ENCODE measurements at regions of chr10 and their contacts with region 1.

Region 1: DNA sequence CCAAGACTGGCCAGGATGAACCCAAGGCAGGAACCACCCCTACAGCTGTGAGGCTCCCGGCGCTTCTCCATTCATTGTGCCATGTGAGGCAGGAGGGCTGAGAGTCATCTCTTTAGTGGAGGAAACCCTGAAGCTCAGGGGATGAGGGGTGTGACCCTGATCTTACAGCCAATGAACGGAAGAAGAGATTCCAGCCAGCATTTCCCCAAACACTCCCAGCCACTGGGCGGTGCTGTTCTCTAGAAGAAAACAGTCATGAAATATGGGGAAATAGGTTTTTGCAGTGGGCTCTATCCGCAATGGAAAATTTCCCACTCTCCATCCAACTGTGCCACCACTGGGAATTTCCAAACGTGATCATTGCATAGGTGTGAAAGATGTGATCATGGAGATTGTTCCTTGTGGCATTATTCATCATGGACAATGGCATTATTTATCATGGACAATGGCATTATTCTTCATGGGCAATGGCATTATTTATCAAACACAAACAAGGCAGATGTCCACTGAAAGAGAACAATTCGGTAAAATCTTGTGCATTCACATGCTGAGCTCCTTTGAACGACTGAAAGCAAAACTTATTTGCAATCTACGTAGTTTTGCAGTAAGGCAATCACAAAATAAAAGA is 14.0 kb upstream of the SLC18A2 start:
- DNase-seq: peak in 1 of 2 experiments; percentile 65
- H3K4me3 ChIP-seq: no peak overlapping the region
- H3K27ac ChIP-seq: no peak overlapping the region
- H3K4me1 ChIP-seq: no peaks in the 10 kb centered on the region
- H3K27me3 ChIP-seq: no peaks in the 10 kb centered on the region
- CTCF ChIP-seq: peak; percentile 69 to 90 (median 80)
- EP300 ChIP-seq: no peak
- POLR2A ChIP-seq: no peak
- RAD21 ChIP-seq: peak; percentile 85 to 87

Region 2: DNA sequence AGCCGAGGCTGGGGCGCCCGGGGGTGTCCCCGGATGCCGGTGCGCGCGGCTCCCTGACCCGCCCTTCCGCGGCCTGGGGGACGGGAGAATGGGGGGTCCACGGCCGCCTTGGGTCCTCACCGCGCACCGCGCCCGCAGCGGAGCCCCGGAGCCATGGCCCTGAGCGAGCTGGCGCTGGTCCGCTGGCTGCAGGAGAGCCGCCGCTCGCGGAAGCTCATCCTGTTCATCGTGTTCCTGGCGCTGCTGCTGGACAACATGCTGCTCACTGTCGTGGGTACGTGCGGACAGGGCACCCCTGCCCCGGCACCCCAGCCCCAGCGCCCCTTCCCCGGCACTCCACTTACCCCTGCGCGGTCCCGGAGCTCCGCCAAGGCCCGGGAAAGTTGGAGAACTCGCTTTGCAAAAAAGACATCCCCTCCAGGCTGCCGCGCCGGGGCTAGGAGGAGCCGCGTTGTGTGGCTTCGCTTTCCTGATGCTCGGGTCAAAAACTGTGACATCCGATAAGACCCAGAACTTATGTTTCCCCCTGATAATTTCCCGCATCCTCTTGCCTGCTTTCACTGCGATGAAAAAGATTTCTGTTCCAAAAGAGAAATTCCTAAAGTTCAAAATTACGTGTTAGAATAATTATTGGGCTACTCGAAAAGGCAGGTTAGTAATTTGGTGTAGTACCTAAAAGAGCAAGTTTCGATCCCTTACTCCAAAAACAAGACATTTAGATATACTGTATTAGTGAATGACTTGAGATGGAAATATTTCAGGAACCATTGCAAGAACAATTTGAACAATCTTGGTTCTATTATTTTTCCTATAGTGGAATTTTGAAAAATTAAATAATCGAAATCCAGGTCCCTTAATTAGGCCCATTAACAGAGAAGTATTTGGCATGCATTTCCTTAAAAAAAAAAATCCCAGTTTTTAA is 14.9 kb after region 1 on chr10:
- CTCF ChIA-PET with region 1: interaction called, 14 read pairs
- POLR2A ChIA-PET with region 1: interaction called, 5 read pairs
- DNase-seq: peak in 1 of 2 experiments; percentile 72
- H3K4me3 ChIP-seq: peak overlapping the region; percentile 55 to 87 (median 65)
- H3K27ac ChIP-seq: no peak overlapping the region
- H3K4me1 ChIP-seq: peaks cover 0 to 6% (median 3%) of the 10 kb centered on the region in 4 experiments; a peak in 5 of 7 replicates
- H3K27me3 ChIP-seq: peaks cover 2 to 24% (median 13%) of the 10 kb centered on the region in 4 experiments
- CTCF ChIP-seq: no peak
- EP300 ChIP-seq: no peak
- POLR2A ChIP-seq: no peak
- RAD21 ChIP-seq: no peak

Region 3: DNA sequence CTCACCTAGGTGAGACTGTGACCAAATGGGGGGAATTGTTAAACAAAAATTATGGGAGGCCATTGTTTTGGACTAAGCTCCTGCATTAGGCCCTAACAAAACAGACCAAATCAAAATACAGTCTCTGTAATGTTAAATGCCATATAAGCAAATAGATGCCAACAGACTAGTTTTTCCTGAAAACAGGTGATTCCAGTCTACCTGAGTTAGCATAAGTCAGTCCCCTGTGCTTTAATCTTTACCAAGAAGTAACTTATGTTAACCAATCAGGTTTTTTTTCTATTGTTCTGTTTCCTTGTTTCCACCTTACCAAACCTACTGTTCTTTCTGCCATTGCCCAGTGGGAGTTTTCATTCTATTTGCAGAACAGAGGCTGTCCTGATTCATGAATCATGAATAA is 100.3 kb after region 1 on chr10:
- CTCF ChIA-PET with region 1: interaction called, 12 read pairs
- POLR2A ChIA-PET with region 1: no interaction called
- DNase-seq: no peak
- H3K4me3 ChIP-seq: peak overlapping the region in 1 of 4 experiments; percentile 12; a peak in 1 of 8 replicates
- H3K27ac ChIP-seq: no peak overlapping the region
- H3K4me1 ChIP-seq: peaks cover 0 to 19% (median 8%) of the 10 kb centered on the region in 4 experiments; a peak in 4 of 7 replicates
- H3K27me3 ChIP-seq: no peaks in the 10 kb centered on the region
- CTCF ChIP-seq: no peak
- EP300 ChIP-seq: no peak
- POLR2A ChIP-seq: no peak
- RAD21 ChIP-seq: no peak

Measured in H1 (cell line).